ENCODE measurements at regions of chr5 and their contacts with region 1.

Region 1: GRCh38 chr5:80181618-80182211 is 74.1 kb downstream of the SERINC5 start:
- DNase-seq: no peak
- ATAC-seq: peak; percentile 43

Region 2: DNA sequence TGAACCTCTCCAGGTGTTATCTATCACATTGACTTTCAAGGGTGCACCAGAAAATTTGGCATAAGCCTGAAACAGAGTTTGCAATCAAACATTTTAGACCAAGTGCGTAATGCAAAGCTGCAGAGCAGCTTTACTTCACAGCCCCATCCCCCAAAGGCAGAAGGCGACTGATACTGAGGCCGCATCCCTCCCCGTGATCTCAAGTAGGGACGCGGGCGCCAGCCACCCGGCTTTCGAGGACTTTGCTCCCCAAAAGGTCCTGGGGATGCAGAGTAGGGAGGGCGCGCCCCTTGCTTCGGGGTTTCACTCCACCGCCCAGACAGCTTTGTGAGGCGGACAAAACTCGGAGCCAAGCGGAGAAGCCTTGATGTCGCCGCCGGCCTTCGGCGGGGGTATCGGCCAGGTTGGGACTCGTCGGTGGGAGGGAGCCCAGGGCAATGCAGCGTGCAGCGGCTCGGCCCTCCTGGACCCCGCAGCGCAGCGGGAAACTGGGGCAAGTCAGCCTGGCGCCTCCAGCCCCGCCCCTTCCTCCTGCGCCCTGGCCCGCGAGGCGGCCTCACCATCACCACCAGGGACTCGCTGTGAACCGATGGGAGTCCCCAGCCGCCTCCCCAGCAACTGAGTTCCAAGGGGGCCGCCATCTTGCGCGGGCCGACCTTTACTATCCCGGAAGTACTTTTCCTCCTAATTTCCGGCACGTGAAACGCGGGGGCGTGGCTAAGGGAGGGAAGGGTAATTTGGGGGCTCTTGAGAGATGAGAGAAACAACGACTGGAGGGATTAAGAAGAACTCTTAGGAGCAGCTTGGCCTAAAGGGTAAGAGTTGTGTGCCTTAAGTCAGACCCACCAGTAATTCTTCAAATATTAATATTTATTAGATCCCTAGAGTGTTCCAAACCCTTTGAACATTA is 190.9 kb before region 1 on chr5 and contains the start of gene MTX3:
- intact Hi-C with region 1: loop called (anchors 5 kb)
- DNase-seq: peak; percentile 93
- ATAC-seq: peak; percentile 96
- total RNA-seq, gene MTX3: 9.7 TPM

Measured in Right ventricle myocardium inferior (tissue), 1 donor.